ENCODE measurements at regions of chr5 and their contacts with region 1.

Region 1: GRCh38 chr5:156865427-156865826 is 15.3 kb downstream of the PPP1R2B start:
- DNase-seq: no peak
- H3K4me3 ChIP-seq: no peak overlapping the region
- H3K27ac ChIP-seq: no peak overlapping the region
- H3K4me1 ChIP-seq: peaks cover 26% of the 10 kb centered on the region
- CTCF ChIP-seq: no peak

Region 2: DNA sequence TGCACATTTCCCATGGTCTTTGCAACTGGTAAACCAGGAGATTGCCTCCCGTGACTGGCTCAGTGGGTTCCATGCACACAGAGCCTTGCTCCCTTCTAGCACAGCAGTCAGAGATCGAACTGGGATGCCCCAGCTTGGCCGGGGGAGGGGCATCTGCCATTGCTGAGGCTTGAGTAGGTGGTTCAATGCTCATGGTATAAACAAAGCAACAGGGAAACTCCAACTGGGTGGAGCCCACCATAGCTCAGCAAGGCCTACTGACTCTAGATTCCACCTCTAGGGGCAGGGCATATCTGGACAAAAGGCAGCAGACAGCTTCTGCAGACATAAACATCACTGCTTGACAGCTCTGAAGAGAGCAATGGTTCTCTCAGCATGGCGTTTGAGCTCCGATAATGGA is 82.3 kb before region 1 on chr5:
- CTCF ChIA-PET with region 1: no interaction called
- POLR2A ChIA-PET with region 1: no interaction called
- intact Hi-C with region 1: no loop called
- DNase-seq: peak; percentile 8
- H3K4me3 ChIP-seq: no peak overlapping the region
- H3K27ac ChIP-seq: no peak overlapping the region
- H3K4me1 ChIP-seq: no peaks in the 10 kb centered on the region
- CTCF ChIP-seq: no peak

Region 3: DNA sequence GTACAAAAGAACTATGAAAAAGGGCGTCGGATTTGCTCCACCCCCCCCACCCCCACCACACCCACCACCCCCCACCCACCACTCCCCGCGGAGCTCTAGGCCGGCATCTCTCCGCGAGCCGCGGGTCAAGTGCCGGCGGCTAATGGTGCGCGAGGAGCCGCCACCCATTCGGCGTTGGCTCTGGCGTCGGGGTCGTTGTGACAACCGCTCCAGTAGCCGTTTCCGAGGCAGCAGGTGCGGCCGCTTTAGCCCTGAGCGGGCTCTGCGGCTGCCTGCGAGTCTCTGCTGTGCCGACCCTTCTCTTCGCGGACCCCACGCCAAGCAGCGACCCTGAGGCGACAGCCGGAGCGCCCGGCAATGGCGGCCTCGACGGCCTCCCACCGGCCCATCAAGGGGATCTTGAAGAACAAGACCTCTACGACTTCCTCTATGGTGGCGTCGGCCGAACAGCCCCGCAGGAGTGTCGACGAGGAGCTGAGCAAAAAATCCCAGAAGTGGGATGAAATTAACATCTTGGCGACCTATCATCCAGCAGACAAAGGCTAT is 15.1 kb before region 1 on chr5 and contains the start of gene PPP1R2B:
- CTCF ChIA-PET with region 1: no interaction called
- POLR2A ChIA-PET with region 1: interaction called, 12 read pairs
- intact Hi-C with region 1: no loop called
- DNase-seq: no peak
- H3K4me3 ChIP-seq: no peak within 1 kb of the TSS
- H3K27ac ChIP-seq: no peak within 1 kb of the TSS
- H3K4me1 ChIP-seq: peaks cover 6% of the 10 kb centered on the region
- CTCF ChIP-seq: no peak
- total RNA-seq, gene PPP1R2B: 0.15 TPM in 1 of 2 replicates, not detected in the other

Region 4: DNA sequence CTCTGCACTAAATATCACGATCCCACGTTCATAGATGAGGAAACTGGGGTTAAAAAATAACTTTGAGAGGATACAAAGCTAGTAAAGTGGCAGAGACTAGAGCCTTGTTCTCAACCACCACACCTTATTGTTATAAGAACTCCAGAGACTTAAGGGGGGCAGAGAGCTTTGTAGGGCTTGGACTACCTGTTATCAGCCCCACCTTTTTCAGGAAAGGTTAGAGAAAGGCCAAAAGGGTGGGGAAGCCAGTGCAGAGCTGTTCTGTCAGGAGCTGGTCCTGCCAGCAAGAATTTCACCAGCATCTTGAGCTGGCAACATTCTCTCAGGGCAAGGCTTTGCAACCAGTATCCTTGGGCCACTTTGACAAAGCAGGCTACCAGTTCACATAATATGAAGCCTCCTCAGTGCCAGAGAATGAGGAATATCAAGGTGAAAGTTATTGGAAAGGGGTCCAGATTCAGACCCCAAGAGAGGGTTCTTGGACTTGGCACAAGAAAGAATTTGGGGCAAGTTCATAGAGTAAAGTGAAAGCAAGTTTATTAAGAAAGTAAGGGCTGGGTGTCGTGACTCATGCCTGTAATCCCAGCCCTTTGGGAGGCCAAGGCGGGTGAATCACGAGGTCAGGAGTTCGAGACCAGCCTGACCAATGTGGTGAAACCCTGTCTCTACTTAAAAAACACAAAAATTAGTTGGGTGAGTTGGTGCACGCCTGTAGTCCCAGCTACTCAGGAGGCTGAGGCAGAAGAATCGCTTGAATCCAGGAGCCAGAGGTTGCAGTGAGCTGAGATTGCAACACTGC is 1059.7 kb after region 1 on chr5:
- CTCF ChIA-PET with region 1: no interaction called
- POLR2A ChIA-PET with region 1: no interaction called
- intact Hi-C with region 1: no loop called
- DNase-seq: no peak
- H3K4me3 ChIP-seq: no peak overlapping the region
- H3K27ac ChIP-seq: no peak overlapping the region
- H3K4me1 ChIP-seq: peaks cover 2% of the 10 kb centered on the region
- CTCF ChIP-seq: no peak